ENCODE measurements at regions of chr1 and their contacts with region 1.

Region 1: GRCh38 chr1:27044613-27045151 is 32.0 kb upstream of the TENT5B start:
- DNase-seq: peak; percentile 97
- ATAC-seq: peak; percentile 78
- H3K4me3 Mint-ChIP-seq: peak overlapping the region; percentile 29
- H3K27ac Mint-ChIP-seq: no peak overlapping the region
- H3K4me1 Mint-ChIP-seq: peaks cover 58% of the 10 kb centered on the region
- H3K27me3 Mint-ChIP-seq: no peaks in the 10 kb centered on the region
- CTCF ChIP-seq: peak; percentile 97

Region 2: DNA sequence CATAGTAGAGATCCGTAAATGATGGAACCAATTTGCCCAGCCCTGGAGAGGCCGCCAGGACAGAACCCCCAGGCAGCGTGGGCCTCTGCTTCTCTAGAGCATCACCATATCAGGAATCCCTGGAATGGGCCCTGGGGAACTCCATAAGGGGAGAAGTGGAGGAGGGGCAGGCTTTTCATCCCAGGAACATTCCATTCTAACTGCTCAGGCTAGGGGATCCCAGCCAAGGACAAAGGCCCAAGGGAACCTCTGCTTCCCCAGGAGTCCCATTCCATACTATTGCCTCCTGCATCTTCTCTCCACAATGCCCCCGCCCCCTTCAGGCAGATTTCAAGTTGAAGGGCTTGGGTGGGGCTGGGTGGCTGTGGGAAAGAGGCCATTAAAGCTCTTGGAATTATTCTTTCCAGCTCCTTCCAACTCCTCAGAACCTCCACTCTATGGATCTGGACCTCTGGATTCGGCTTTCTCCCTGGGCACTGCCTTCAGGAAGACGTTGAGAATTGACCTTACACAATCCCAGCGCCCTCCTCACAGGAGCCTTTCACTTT is 45.2 kb before region 1 on chr1:
- CTCF ChIA-PET with region 1: interaction called, 190 read pairs
- POLR2A ChIA-PET with region 1: interaction called, 11 read pairs
- DNase-seq: peak; percentile 86
- ATAC-seq: peak; percentile 74
- H3K4me3 Mint-ChIP-seq: peak overlapping the region; percentile 20; the same call in 1 of the 2 replicates
- H3K27ac Mint-ChIP-seq: peak overlapping the region; percentile 97
- H3K4me1 Mint-ChIP-seq: peaks cover 92% of the 10 kb centered on the region
- H3K27me3 Mint-ChIP-seq: no peaks in the 10 kb centered on the region
- CTCF ChIP-seq: no peak

Region 3: GRCh38 chr1:27057801-27058625 is 13.3 kb after region 1 on chr1:
- CTCF ChIA-PET with region 1: interaction called, 119 read pairs
- POLR2A ChIA-PET with region 1: interaction called, 3 read pairs
- DNase-seq: peak; percentile 68
- ATAC-seq: peak; percentile 43
- H3K4me3 Mint-ChIP-seq: peak overlapping the region; percentile 61
- H3K27ac Mint-ChIP-seq: peak overlapping the region; percentile 98
- H3K4me1 Mint-ChIP-seq: peaks cover 45% of the 10 kb centered on the region
- H3K27me3 Mint-ChIP-seq: no peaks in the 10 kb centered on the region; the same call in 1 of the 2 replicates
- CTCF ChIP-seq: no peak

Region 4: GRCh38 chr1:27097484-27097917 is 52.8 kb after region 1 on chr1:
- CTCF ChIA-PET with region 1: interaction called, 636 read pairs
- POLR2A ChIA-PET with region 1: interaction called, 5 read pairs
- DNase-seq: peak; percentile 84
- ATAC-seq: peak; percentile 68
- H3K4me3 Mint-ChIP-seq: no peak overlapping the region
- H3K27ac Mint-ChIP-seq: no peak overlapping the region
- H3K4me1 Mint-ChIP-seq: peaks cover 27% of the 10 kb centered on the region
- H3K27me3 Mint-ChIP-seq: no peaks in the 10 kb centered on the region; the same call in 1 of the 2 replicates
- CTCF ChIP-seq: peak; percentile 99

Region 5: DNA sequence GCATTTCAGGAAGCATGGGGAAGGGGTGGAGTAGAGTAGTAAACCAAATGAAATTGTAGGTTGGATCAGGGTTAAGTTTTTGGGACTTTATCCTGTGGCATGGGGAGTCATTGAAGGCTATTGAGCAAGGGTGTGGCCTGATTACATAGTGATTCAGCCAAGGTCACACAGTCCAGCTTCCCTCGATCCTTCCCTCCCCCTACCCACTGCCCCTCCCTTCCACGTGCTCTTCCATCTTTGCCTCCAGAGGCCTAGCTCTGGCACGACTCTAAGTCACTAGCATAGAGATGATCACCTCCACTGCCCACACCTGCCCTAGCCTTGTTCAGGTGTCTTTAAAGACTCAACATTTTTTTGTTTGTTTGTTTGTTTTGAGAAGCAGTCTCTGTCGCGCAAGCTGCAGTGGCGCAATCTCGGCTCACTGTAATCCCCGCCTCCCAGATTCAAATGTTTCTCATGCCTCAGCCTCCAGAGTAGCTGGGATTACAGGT is 147.4 kb after region 1 on chr1:
- CTCF ChIA-PET with region 1: interaction called, 11 read pairs
- POLR2A ChIA-PET with region 1: no interaction called
- DNase-seq: no peak
- ATAC-seq: no peak
- H3K4me3 Mint-ChIP-seq: no peak overlapping the region
- H3K27ac Mint-ChIP-seq: no peak overlapping the region
- H3K4me1 Mint-ChIP-seq: no peaks in the 10 kb centered on the region
- H3K27me3 Mint-ChIP-seq: peaks cover 2% of the 10 kb centered on the region; the same call in 1 of the 2 replicates
- CTCF ChIP-seq: no peak

Measured in WTC11 (cell line).